WTC11 (cell line): ENCODE measurements at regions of chr1 and their contacts with region 1.

Region 1: DNA sequence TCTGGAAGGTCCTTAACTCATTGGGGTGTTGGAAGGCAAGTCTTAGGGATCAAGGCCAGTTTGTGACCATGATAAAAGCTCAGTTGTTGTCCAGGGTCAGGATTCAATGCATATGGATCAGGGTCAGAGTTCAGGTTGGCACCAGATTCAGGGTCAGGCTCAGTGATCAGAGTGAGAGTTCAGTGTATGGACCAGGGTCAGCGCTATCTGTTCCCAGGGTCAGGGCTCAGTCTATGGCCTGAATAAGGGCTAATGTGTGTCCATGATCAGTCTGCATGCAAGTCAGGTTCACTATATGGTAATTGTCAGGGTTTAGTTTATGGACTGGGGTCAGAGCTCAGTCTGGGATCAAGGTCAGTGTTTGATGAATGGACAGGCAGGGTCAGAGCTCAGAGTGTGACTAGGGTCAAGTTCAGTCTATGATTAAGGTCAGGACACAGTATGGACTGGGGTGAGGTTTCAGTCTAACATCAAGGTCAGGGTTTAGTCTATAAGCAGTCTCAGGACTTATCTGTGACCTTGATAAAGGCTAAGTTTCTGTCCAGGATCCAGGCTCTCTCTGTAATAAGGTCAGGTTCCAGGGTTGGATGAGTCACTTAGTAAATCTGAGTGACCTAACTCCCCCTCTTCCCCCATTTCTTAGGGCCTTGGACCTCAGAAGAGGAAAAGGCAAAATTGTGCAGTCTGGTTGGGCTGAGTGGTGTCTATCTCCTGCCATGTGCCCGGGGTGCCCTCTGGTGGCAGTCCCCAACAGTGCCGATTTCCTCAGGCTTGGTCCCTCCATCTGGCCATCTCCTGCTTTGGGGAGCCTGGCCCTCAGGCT is 23.8 kb downstream of the KNCN start:
- DNase-seq: peak; percentile 91
- ATAC-seq: peak; percentile 60
- H3K4me3 Mint-ChIP-seq: no peak overlapping the region
- H3K27ac Mint-ChIP-seq: no peak overlapping the region
- H3K4me1 Mint-ChIP-seq: peaks cover 56% of the 10 kb centered on the region
- H3K27me3 Mint-ChIP-seq: peaks cover 97% of the 10 kb centered on the region
- CTCF ChIP-seq: peak; percentile 75

Region 2: GRCh38 chr1:46448109-46448911 is 79.4 kb before region 1 on chr1:
- CTCF ChIA-PET with region 1: interaction called, 241 read pairs
- POLR2A ChIA-PET with region 1: interaction called, 5 read pairs
- DNase-seq: peak; percentile 83
- ATAC-seq: peak; percentile 56
- H3K4me3 Mint-ChIP-seq: peak overlapping the region; percentile 79
- H3K27ac Mint-ChIP-seq: peak overlapping the region; percentile 16; the same call in 1 of the 2 replicates
- H3K4me1 Mint-ChIP-seq: peaks cover 64% of the 10 kb centered on the region
- H3K27me3 Mint-ChIP-seq: peaks cover 97% of the 10 kb centered on the region
- CTCF ChIP-seq: no peak

Region 3: GRCh38 chr1:46477153-46477929 is 50.3 kb before region 1 on chr1:
- CTCF ChIA-PET with region 1: interaction called, 68 read pairs
- POLR2A ChIA-PET with region 1: no interaction called
- DNase-seq: peak; percentile 85
- ATAC-seq: peak; percentile 70
- H3K4me3 Mint-ChIP-seq: no peak overlapping the region
- H3K27ac Mint-ChIP-seq: no peak overlapping the region
- H3K4me1 Mint-ChIP-seq: peaks cover 31% of the 10 kb centered on the region
- H3K27me3 Mint-ChIP-seq: peaks cover 71% of the 10 kb centered on the region
- CTCF ChIP-seq: peak; percentile 88

Region 4: DNA sequence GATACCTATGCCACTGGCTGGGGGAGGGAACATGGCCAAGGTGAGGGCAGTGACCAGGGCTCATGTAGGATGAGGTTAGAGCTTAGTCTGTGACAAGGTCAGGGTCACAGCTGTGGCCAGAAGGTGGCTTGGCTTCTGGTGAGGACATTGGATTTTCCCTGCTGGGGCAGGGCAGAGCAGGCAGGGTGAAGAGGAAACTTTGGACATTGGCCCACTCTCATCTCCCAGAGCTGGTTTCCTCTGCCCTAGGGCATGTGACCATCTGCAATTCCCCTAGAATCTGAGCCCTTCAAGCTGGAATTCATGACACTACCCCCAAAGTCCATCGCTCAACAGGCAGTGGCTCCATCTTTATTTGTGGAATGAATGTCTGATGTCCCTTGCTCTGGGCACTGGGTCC is 32.8 kb before region 1 on chr1:
- CTCF ChIA-PET with region 1: interaction called, 201 read pairs
- POLR2A ChIA-PET with region 1: interaction called, 3 read pairs
- DNase-seq: no peak
- ATAC-seq: no peak
- H3K4me3 Mint-ChIP-seq: no peak overlapping the region
- H3K27ac Mint-ChIP-seq: no peak overlapping the region
- H3K4me1 Mint-ChIP-seq: peaks cover 38% of the 10 kb centered on the region
- H3K27me3 Mint-ChIP-seq: peaks cover 78% of the 10 kb centered on the region
- CTCF ChIP-seq: no peak

Region 5: DNA sequence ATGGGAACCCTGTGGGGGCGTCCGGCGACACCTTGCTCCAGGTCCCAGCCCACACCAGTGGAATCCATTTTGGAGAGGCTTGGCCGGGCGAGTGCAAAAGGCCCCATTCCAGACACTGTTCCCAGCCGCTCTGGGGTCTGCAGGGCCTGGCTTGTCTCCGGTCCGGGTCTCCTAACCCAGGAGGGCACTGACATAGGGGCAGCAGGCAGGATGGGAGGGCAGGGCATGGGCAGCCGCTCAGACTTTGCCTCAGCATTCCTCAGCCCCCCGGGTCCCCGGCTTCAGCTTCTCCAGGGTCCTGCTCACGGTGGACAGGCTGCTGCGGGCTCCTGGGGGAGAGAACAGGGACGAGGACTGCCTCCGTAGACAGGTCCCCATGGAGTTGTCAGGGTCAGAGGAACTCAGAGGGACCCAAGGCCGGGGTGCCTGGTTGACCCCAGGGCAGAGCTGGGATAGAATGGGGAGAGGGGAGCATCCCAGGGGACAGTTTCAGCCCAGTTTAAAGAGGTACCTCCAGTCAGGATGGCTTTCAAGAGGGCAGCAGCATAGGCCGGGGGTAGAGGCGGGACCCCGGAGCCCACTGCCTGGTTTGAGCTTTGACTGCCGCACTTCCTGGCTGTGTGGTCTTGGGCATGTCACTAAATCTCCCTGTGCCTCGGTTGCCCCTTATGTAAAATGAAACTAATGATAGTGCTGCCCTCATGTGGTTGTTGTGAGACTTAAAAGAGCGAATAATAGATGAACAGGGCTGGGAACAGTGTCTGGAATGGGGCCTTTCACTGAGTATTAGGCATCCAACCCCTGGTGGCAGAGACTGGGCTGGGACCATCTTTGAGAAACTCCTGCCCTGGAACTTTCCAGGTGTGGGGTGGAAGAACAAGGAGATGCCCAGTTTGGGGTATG is 20.0 kb after region 1 on chr1:
- CTCF ChIA-PET with region 1: interaction called, 190 read pairs
- POLR2A ChIA-PET with region 1: no interaction called
- DNase-seq: no peak
- ATAC-seq: peak; percentile 44
- H3K4me3 Mint-ChIP-seq: no peak overlapping the region
- H3K27ac Mint-ChIP-seq: no peak overlapping the region
- H3K4me1 Mint-ChIP-seq: peaks cover 34% of the 10 kb centered on the region
- H3K27me3 Mint-ChIP-seq: peaks cover 47% of the 10 kb centered on the region
- CTCF ChIP-seq: 0 out of 2 replicates have a peak, but pooled peaks have one; percentile 25

Region 6: GRCh38 chr1:46616277-46617107 is 88.8 kb after region 1 on chr1 and contains the start of gene MOB3C:
- CTCF ChIA-PET with region 1: interaction called, 14 read pairs
- POLR2A ChIA-PET with region 1: no interaction called
- DNase-seq: peak; percentile 61
- ATAC-seq: peak; percentile 14
- H3K4me3 Mint-ChIP-seq: peak within 1 kb of the TSS; percentile 86
- H3K27ac Mint-ChIP-seq: no peak within 1 kb of the TSS
- H3K4me1 Mint-ChIP-seq: peaks cover 52% of the 10 kb centered on the region
- H3K27me3 Mint-ChIP-seq: peaks cover 30% of the 10 kb centered on the region
- CTCF ChIP-seq: no peak
- total RNA-seq, gene MOB3C: 3.1 to 4.0 TPM (median 3.4 TPM) in 3 replicates